ENCODE measurements at regions of chr10 and their contacts with region 1.

Region 1: DNA sequence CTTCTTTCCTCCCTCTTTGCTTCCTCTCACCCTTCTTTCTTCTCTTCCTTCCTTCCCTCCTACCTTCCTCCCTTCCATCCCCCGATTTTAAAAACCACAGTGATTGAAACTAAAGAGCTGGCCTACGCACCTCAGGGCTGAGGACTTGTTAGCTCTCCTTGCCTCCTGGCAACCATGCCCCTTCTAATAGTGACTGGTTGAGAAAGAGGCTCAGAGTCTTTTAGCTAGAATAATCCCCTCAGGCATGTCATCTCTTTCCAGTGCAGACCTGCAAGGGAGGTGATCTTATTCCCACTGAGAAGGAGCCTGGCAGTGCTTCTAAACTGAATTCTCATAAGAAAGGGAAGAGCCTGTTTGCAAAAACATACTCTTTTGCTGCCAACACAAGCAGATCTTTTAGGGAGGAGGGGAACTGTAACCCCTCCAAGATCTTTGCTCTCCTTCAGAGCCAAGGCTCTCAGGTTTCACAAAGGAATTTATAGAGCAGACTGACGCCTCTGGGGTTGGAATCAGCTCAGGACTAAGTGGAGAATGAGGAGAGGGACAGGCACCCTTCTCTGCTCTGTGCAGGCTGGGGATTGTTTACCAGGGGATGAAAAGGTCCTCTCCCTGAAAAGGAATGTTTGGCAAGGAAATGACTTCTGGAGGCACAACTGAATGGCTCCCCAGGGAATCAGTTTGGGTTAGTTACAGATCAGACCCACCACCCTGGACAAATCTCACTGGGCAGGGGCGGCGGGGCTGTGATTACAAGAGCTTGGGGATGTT is 9.4 kb upstream of the ANKRD1 start:
- DNase-seq: peak in 4 of 5 donors; percentile 31 to 50 (median 43)
- ATAC-seq: peak; percentile 82 to 89 (median 88)
- H3K4me3 ChIP-seq: peak overlapping the region in 5 of 12 donors; percentile 6 to 23 (median 18)
- H3K27ac ChIP-seq: peak overlapping the region; percentile 54 to 97 (median 86)
- H3K4me1 ChIP-seq: peaks cover 0 to 37% (median 27%) of the 10 kb centered on the region in 12 donors
- H3K27me3 ChIP-seq: no peaks in the 10 kb centered on the region
- CTCF ChIP-seq: no peak
- POLR2A ChIP-seq: peak in 1 of 2 donors; percentile 22

Region 2: DNA sequence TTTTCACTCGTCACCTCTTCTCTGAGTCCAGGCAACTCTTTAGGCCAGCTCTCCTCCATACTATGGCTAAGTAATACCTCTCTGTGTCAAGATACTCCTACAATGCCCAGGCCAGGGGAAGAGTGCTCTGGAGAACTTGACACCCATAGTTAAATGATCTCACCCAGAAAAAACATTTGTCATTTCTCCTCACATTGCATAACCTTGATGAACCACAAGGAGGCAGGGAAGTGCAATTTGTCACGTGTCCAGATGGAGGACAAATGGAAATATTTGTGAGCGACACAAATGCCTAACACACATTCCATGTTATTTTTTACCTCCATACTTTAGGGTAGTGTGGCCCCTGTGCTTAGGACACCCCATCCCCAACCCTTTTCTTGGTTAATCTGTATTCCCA is 150.7 kb before region 1 on chr10:
- intact Hi-C with region 1: no loop called
- DNase-seq: no peak
- ATAC-seq: no peak
- H3K4me3 ChIP-seq: no peak overlapping the region
- H3K27ac ChIP-seq: no peak overlapping the region
- H3K4me1 ChIP-seq: peaks cover 0 to 5% (median 0%) of the 10 kb centered on the region in 12 donors
- H3K27me3 ChIP-seq: no peaks in the 10 kb centered on the region
- CTCF ChIP-seq: no peak
- POLR2A ChIP-seq: no peak

Region 3: DNA sequence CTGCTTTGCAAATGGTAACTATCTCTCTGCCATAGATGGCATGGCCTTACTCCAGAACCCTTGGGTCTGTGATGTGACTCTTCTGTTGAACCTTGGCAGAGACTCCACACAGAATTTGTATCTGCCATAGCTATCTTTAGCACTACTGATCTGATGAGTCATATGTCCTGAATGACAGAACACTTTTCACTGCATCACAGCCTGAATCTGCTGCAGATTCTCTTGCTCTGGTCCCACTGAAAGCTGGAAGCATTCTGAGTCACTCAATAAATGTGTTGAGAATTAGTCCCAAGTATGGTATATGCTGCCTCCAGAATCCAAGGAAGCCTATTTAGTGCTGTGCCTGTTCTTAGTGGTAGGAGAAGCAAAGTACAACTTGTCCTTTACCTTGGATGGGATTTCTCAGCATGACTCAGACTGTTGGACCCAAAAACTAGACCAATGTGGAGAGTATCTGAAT is 30.1 kb after region 1 on chr10:
- intact Hi-C with region 1: loop called in 2 of 10 experiments (anchors 2 to 5 kb)
- DNase-seq: no peak
- ATAC-seq: peak in 3 of 4 donors; percentile 21 to 80 (median 75)
- H3K4me3 ChIP-seq: no peak overlapping the region
- H3K27ac ChIP-seq: peak overlapping the region in 4 of 12 donors; percentile 15 to 39 (median 38)
- H3K4me1 ChIP-seq: peaks cover under 1 to 25% (median 18%) of the 10 kb centered on the region in 12 donors
- H3K27me3 ChIP-seq: no peaks in the 10 kb centered on the region
- CTCF ChIP-seq: no peak
- POLR2A ChIP-seq: no peak

Region 4: GRCh38 chr10:90969947-90970684 is 39.9 kb after region 1 on chr10:
- intact Hi-C with region 1: loop called in 1 of 10 experiments (anchors 5 kb)
- DNase-seq: no peak
- ATAC-seq: peak; percentile 48 to 72 (median 64)
- H3K4me3 ChIP-seq: peak overlapping the region in 3 of 12 donors; percentile 37 to 49 (median 40)
- H3K27ac ChIP-seq: peak overlapping the region; percentile 1 to 81 (median 56)
- H3K4me1 ChIP-seq: peaks cover 2 to 40% (median 14%) of the 10 kb centered on the region in 12 donors
- H3K27me3 ChIP-seq: no peaks in the 10 kb centered on the region
- CTCF ChIP-seq: peak in 4 of 12 donors; percentile 14 to 42 (median 27)
- POLR2A ChIP-seq: no peak

Region 5: DNA sequence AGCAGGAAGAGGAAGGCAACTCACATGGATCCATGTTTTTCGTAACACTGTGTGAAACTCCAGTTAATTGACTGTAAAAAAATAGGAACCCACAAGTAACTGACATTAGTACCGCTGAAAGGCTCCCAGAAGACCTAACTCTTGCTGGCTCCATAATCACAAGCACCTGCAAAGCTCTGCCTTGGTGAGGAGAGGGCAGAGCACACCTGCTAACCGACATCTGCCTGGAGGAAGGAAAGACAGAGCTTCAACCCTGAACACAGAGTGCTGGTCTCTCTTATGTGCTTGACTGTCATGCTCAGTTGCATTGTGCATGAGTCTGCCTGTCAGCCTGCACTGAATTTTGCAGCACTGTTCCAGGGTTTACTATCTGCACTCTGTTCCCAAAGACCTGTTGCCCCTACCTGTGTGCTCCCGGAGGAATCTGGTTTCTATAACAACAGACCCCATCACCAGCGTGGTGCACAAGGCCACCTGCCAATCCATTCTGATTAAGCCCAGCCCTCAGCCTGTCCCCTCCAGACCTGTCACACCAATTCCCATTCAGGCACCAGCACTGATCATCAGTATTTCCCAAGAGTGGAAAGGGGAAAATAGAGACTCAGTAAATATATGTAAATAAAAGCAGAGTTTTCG is 53.8 kb after region 1 on chr10:
- intact Hi-C with region 1: loop called in 3 of 10 experiments (anchors 5 to 10 kb)
- DNase-seq: no peak
- ATAC-seq: no peak
- H3K4me3 ChIP-seq: no peak overlapping the region
- H3K27ac ChIP-seq: peak overlapping the region in 8 of 12 donors; percentile 72 to 89 (median 82)
- H3K4me1 ChIP-seq: peaks cover 0 to 37% (median 14%) of the 10 kb centered on the region in 12 donors
- H3K27me3 ChIP-seq: no peaks in the 10 kb centered on the region
- CTCF ChIP-seq: no peak
- POLR2A ChIP-seq: no peak